ENCODE measurements at regions of chr1 and their contacts with region 1.

Region 1: DNA sequence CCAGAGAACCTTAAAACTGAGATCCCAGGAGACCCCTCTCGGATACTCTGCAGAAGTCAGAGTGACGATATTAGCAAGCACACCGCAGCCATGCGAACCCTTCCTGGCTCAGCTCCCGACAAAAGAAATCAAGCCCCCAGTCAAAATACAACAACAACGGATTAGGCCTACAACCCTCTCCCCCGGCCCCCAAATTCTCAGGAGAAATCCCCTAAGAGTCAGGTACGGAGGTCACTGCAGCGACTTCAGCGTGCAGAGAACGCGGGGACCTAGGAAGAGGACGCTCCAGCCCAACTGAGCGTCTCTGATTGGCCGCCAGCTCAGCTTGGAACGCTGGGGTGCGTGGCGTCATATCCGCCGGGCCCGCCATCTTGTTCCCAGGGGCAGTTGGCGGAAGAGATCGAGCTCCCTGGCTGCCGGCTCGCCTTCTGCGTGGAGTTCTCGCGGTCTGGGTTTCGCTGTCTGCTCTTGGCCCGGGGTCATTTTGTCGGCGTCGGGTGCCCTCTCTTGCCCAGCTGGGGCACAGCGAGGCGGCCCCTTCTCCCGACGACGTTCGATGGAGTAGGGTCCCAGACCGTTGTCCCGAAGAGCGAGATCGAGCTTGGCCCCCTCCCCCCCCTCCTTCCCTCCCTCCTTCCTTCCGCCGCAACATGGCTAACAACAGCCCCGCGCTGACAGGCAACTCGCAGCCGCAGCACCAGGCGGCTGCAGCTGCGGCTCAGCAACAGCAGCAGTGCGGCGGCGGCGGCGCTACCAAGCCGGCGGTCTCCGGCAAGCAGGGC is at the start of gene PRPF38B:
- DNase-seq: peak; percentile 95

Region 2: GRCh38 chr1:108559215-108560186 is 132.6 kb before region 1 on chr1 and contains the start of gene EEIG2:
- CTCF ChIA-PET with region 1: no interaction called
- POLR2A ChIA-PET with region 1: interaction called, 12 read pairs
- DNase-seq: peak; percentile 95

Region 3: GRCh38 chr1:108678706-108679105 is 13.4 kb before region 1 on chr1:
- CTCF ChIA-PET with region 1: interaction called, 6 read pairs
- POLR2A ChIA-PET with region 1: interaction called, 62 read pairs
- DNase-seq: no peak

Region 4: GRCh38 chr1:108708691-108709660 is 16.8 kb after region 1 on chr1:
- CTCF ChIA-PET with region 1: no interaction called
- POLR2A ChIA-PET with region 1: interaction called, 28 read pairs
- DNase-seq: peak; percentile 40

Region 5: GRCh38 chr1:108745980-108746371 is 53.8 kb after region 1 on chr1:
- CTCF ChIA-PET with region 1: no interaction called
- POLR2A ChIA-PET with region 1: interaction called, 13 read pairs
- DNase-seq: no peak

Region 6: GRCh38 chr1:108828022-108828961 is 136.2 kb after region 1 on chr1:
- CTCF ChIA-PET with region 1: no interaction called
- POLR2A ChIA-PET with region 1: interaction called, 12 read pairs
- DNase-seq: peak; percentile 90

Region 7: DNA sequence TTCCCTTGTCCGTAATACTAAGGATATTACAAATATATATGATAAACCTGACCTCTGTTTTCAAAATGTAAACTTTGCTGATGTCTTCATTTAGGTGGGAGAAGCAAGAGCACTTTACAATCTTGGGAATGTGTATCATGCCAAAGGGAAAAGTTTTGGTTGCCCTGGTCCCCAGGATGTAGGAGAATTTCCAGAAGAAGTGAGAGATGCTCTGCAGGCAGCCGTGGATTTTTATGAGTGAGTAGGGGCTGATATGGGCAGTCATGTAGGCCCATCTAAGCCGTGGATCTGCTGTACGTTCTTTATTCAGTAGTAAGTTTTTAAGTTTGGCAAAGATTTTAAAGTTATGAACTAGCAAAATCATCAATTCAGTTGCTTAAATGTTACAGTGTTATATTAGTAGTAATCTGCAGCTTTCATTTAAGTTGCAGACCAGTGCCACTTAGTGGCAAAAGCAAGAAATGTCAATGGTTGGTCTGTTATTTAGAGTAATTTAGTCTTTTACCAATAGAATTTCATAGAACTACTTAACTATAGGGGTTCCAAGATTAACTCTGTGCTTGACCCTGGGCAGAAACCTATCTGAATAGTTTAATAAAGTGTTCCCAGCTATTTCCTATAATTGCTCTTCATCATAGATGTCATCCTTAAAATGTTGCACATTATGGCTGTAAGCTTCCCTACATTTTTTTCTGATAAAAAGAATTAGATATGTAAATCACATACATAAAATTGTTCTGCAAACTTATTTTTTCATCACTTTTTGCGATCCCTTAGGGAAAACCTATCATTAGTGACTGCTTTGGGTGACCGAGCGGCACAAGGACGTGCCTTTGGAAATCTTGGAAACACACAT is 206.0 kb after region 1 on chr1:
- CTCF ChIA-PET with region 1: interaction called, 6 read pairs
- POLR2A ChIA-PET with region 1: interaction called, 10 read pairs
- DNase-seq: peak; percentile 58